K562 (cell line): ENCODE measurements at regions of chr3 and their contacts with region 1.

Region 1: GRCh38 chr3:111717601-111718000 is 122.5 kb upstream of the ZBED2 start:
- DNase-seq: peak; percentile 54 to 70 (median 60)
- ATAC-seq: peak; percentile 92
- H3K4me3 ChIP-seq: no peak overlapping the region
- H3K27ac ChIP-seq: no peak overlapping the region
- H3K4me1 ChIP-seq: no peaks in the 10 kb centered on the region
- H3K27me3 ChIP-seq: no peaks in the 10 kb centered on the region
- CTCF ChIP-seq: peak; percentile 70 to 83 (median 77)
- EP300 ChIP-seq: no peak
- POLR2A ChIP-seq: no peak
- RAD21 ChIP-seq: peak; percentile 69 to 82

Region 2: DNA sequence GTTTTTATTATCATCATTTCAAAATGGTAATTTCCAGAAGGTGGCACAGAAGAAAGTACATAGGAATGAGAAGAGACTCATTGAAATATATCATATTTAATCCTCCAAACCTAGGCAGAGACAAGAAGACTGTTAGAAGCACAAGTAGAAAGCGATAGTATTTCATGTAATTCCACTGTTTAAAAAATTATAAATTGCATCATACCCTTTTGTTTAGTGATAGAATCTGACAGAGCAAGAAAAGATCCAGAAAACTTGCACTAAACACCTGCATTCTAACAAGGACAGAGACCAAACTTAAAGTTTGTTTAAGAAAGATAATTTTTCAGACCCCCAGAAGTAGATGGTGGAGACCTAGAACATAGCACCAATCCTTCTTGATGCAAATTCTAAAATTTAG is 232.5 kb before region 1 on chr3:
- CTCF ChIA-PET with region 1: no interaction called
- POLR2A ChIA-PET with region 1: no interaction called
- in situ Hi-C with region 1: no loop called
- intact Hi-C with region 1: no loop called
- DNase-seq: no peak
- ATAC-seq: no peak
- H3K4me3 ChIP-seq: no peak overlapping the region
- H3K27ac ChIP-seq: no peak overlapping the region
- H3K4me1 ChIP-seq: no peaks in the 10 kb centered on the region
- H3K27me3 ChIP-seq: no peaks in the 10 kb centered on the region
- CTCF ChIP-seq: no peak
- EP300 ChIP-seq: no peak
- POLR2A ChIP-seq: no peak
- RAD21 ChIP-seq: no peak

Region 3: GRCh38 chr3:111668912-111669488 is 48.6 kb before region 1 on chr3:
- CTCF ChIA-PET with region 1: no interaction called
- POLR2A ChIA-PET with region 1: no interaction called
- in situ Hi-C with region 1: no loop called
- intact Hi-C with region 1: loop called (anchors 2 kb)
- DNase-seq: peak; percentile 9 to 16 (median 12)
- ATAC-seq: peak; percentile 75
- H3K4me3 ChIP-seq: no peak overlapping the region
- H3K27ac ChIP-seq: no peak overlapping the region
- H3K4me1 ChIP-seq: no peaks in the 10 kb centered on the region
- H3K27me3 ChIP-seq: peaks cover 0 to 6% of the 10 kb centered on the region in 2 experiments; a peak in 1 of 5 replicates
- CTCF ChIP-seq: peak; percentile 33 to 58 (median 57); a peak in 5 of 6 replicates
- EP300 ChIP-seq: no peak
- POLR2A ChIP-seq: no peak
- RAD21 ChIP-seq: peak; percentile 57 to 66; a peak in 3 of 4 replicates

Region 4: GRCh38 chr3:111967651-111968274 is 250.2 kb after region 1 on chr3:
- CTCF ChIA-PET with region 1: interaction called, 8 read pairs
- POLR2A ChIA-PET with region 1: no interaction called
- in situ Hi-C with region 1: loop called (anchors 5 kb)
- intact Hi-C with region 1: loop called (anchors 1 kb)
- DNase-seq: peak; percentile 35 to 67 (median 52)
- ATAC-seq: peak; percentile 93
- H3K4me3 ChIP-seq: no peak overlapping the region
- H3K27ac ChIP-seq: no peak overlapping the region
- H3K4me1 ChIP-seq: no peaks in the 10 kb centered on the region
- H3K27me3 ChIP-seq: no peaks in the 10 kb centered on the region; a peak in 2 of 5 replicates
- CTCF ChIP-seq: peak; percentile 66 to 69 (median 68)
- EP300 ChIP-seq: no peak
- POLR2A ChIP-seq: no peak
- RAD21 ChIP-seq: peak; percentile 52 to 73

Region 5: DNA sequence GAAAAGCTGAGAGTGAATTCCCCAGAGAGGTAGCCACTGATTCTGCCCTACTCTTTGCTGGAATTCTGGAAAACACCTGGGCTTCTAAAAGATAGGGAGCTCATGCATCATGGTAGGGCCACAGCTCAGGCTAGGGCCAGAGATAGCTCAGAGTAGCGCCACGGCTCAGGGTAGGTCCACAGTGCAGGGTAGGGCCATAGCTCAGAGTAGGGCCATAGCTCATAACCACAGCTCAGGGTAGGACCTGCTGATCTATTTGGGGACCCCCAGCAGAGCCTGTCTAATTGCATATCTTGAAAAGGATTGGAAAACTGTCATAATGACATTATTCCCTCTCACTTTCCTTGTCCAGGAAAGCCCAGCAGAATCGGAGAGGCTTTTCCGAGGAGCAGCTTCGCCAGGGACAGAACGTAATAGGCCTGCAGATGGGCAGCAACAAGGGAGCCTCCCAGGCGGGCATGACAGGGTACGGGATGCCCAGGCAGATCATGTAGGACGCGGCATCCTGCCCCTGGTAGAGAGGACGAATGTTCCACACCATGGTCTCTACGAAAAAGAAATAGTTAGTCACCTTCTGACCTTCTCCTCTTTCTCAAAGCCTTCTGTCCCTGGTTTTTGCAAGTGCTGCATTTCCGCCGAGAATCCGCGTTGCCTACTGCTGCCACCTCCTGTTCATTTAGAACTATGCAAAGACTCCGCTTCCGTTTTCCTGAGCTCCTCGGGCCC is 295.6 kb after region 1 on chr3:
- CTCF ChIA-PET with region 1: interaction called, 7 read pairs
- POLR2A ChIA-PET with region 1: interaction called, 3 read pairs
- in situ Hi-C with region 1: no loop called
- intact Hi-C with region 1: loop called (anchors 1 kb)
- DNase-seq: peak; percentile 27 to 60 (median 34)
- ATAC-seq: peak; percentile 94
- H3K4me3 ChIP-seq: no peak overlapping the region
- H3K27ac ChIP-seq: no peak overlapping the region
- H3K4me1 ChIP-seq: no peaks in the 10 kb centered on the region
- H3K27me3 ChIP-seq: no peaks in the 10 kb centered on the region; a peak in 1 of 5 replicates
- CTCF ChIP-seq: peak; percentile 57 to 70 (median 70)
- EP300 ChIP-seq: no peak
- POLR2A ChIP-seq: no peak
- RAD21 ChIP-seq: peak; percentile 45 to 57

Region 6: DNA sequence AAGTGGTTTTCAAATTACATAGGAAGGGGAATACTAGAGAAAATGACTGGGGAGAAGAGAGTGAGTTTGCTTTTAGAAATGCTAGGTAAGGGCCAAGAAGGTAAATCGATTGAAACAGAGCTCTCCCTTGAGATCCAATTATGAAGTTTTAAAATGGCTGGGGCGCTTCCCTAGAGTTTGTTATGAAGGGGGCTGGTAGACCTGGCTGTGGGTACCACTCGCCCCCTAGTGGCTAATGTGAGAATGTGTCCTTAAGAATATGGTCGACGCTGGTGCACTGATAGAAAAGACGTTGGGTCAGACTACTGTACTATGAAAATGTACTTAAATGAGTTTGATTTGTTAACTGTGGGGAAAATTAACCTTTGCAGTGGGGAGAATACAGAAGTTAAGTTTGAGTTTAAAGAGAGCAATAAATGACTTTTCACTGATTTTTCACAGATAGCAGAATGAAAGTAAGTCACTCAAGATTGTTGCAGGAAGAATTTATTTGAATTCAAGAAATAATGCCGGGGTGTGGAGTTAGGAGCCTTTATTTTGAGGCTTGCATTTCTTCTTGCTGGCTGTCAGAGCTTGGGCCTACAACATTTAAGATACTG is 326.1 kb after region 1 on chr3:
- CTCF ChIA-PET with region 1: interaction called, 3 read pairs
- POLR2A ChIA-PET with region 1: interaction called, 3 read pairs
- in situ Hi-C with region 1: no loop called
- intact Hi-C with region 1: loop called (anchors 1 kb)
- DNase-seq: peak; percentile 58 to 68 (median 62)
- ATAC-seq: peak; percentile 93
- H3K4me3 ChIP-seq: no peak overlapping the region
- H3K27ac ChIP-seq: no peak overlapping the region
- H3K4me1 ChIP-seq: no peaks in the 10 kb centered on the region
- H3K27me3 ChIP-seq: no peaks in the 10 kb centered on the region; a peak in 1 of 5 replicates
- CTCF ChIP-seq: peak; percentile 63 to 75 (median 66)
- EP300 ChIP-seq: no peak
- POLR2A ChIP-seq: no peak
- RAD21 ChIP-seq: peak; percentile 45 to 56

Region 7: DNA sequence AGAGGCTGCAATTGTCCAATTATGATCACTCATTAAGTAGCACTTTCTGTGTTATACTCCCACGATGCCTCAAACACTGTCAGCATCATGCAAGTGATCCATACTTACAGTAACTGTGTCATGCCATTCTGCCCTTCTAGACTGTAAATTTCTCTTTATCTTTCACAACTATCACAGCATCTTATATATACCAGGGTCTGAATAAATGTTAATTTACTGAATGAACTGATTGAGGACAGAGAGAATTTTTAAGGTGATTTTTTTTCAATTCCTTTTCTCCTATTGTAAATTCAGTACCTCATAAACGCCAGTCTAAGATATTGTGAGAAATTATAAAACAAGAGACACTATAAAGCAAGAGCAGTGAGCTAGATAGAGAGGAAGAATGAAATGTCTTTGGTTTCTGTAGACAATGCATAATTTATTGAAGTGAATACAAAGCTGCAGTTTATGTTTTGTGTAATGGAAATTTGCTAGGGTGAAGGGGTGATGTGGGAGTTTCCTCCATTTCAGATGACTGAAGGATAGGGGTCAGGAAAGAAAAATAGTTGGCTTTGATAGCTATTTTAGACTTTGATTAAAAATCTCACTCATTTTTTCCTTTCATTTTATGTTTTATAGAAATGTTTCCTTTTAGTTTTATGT is 632.7 kb after region 1 on chr3:
- CTCF ChIA-PET with region 1: no interaction called
- POLR2A ChIA-PET with region 1: no interaction called
- in situ Hi-C with region 1: no loop called
- intact Hi-C with region 1: no loop called
- DNase-seq: no peak
- ATAC-seq: no peak
- H3K4me3 ChIP-seq: no peak overlapping the region
- H3K27ac ChIP-seq: no peak overlapping the region
- H3K4me1 ChIP-seq: no peaks in the 10 kb centered on the region
- H3K27me3 ChIP-seq: no peaks in the 10 kb centered on the region
- CTCF ChIP-seq: no peak
- EP300 ChIP-seq: no peak
- POLR2A ChIP-seq: no peak
- RAD21 ChIP-seq: no peak